ENCODE measurements at regions of chr19 and their contacts with region 1.

Region 1: DNA sequence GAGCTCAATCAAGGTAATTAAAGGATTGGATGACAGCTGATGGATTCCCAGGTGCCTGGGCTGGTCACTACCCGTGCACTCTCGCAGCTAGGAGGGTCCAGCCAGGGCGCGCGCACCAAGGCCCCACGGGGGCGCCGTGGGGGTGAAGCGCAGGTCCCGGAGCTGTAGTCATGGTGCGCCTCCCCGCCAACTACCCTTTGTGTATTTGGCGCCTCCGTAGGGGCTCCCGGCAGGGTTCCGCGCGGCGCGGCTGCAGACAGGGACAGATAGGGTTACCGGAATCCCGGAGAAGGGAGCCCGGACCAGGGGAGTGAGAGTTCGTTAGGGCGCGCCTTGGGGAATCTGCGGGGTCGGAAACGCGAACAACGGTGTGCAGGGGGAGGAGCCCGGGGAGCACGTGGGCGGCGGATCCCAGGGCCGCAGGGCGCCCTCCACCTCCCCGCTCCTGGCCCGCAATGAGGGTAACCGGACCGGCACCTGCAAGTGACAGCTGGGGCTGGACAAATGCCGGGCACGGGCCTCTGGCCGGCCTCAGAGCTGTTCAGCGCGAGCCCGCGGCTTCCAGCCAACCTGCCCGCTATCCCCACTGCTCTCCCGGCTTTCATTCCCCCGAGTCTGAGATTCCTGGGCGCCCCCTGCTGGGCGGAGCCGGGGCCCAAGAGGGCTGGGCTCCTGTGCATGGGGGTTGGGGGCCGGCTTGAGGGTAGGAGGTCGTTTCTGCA is 3.4 kb upstream of the PRAM1 start:
- DNase-seq: peak; percentile 81
- H3K4me3 Mint-ChIP-seq: peak overlapping the region; percentile 84
- H3K27ac Mint-ChIP-seq: peak overlapping the region; percentile 63
- H3K4me1 Mint-ChIP-seq: peaks cover 8% of the 10 kb centered on the region
- H3K27me3 Mint-ChIP-seq: no peaks in the 10 kb centered on the region

Region 2: GRCh38 chr19:8412783-8413628 is 92.8 kb before region 1 on chr19 and contains the start of gene MARCHF2:
- CTCF ChIA-PET with region 1: interaction called, 21 read pairs
- intact Hi-C with region 1: loop called (anchors 1 kb)
- DNase-seq: peak; percentile 95
- H3K4me3 Mint-ChIP-seq: peak within 1 kb of the TSS; percentile 56
- H3K27ac Mint-ChIP-seq: no peak within 1 kb of the TSS
- H3K4me1 Mint-ChIP-seq: peaks cover 5% of the 10 kb centered on the region
- H3K27me3 Mint-ChIP-seq: no peaks in the 10 kb centered on the region
- total RNA-seq, gene MARCHF2: 9.2 to 10.3 TPM

Region 3: DNA sequence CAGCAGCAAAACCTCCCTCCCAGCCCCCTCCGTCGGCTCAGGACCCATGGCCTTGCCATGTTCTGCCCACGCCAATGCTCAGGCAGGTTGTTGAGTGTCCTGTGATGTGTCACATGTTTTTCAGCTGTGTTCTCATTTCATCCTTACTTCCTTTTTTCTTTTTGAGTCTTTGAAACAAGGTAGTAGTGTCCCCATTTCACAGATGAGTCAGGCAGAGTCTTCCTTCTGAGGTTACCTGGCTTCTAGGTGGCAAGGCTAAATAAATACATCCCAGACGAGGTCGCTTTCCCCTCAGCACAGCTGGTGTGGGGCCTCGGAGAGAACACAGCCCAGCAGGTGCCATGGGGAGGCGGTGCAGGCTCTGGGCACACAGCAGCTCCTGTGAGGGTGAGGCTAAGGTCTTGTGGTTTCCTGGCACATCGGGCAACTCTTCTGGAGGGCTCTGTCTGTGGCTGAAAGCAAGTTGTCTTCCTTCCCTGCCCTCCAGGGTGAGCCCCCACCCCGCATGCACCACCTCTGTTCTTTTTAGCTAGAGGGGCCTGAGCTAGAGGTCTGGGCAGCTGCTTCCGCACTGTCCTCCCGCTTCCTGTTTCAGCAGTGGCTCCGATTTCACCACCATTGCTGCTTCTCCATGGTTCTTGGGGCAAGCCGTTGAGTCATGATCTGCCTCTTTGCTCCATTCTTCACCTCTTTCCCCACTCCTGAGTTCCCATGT is 18.5 kb before region 1 on chr19:
- CTCF ChIA-PET with region 1: interaction called, 9 read pairs
- intact Hi-C with region 1: loop called (anchors 2 kb)
- DNase-seq: peak; percentile 68
- H3K4me3 Mint-ChIP-seq: no peak overlapping the region
- H3K27ac Mint-ChIP-seq: peak overlapping the region; percentile 89
- H3K4me1 Mint-ChIP-seq: peaks cover 32% of the 10 kb centered on the region
- H3K27me3 Mint-ChIP-seq: no peaks in the 10 kb centered on the region

Measured in activated naive CD4-positive, alpha-beta T cell treated with anti-CD3 and anti-CD28 coated beads for 36 hours (primary cell).